IMR-90 (cell line): ENCODE measurements at regions of chr14 and their contacts with region 1.

Region 1: GRCh38 chr14:67999693-68000384 is 180.3 kb downstream of the RAD51B start:
- DNase-seq: peak; percentile 86
- ATAC-seq: peak; percentile 95
- H3K4me3 ChIP-seq: no peak overlapping the region
- H3K27ac ChIP-seq: peak overlapping the region; percentile 70
- H3K4me1 ChIP-seq: peaks cover 4% of the 10 kb centered on the region; the same call in 1 of the 2 replicates
- H3K27me3 ChIP-seq: no peaks in the 10 kb centered on the region
- CTCF ChIP-seq: no peak
- POLR2A ChIP-seq: no peak
- RAD21 ChIP-seq: 0 out of 2 replicates have a peak, but pooled peaks have one; percentile 2

Region 2: DNA sequence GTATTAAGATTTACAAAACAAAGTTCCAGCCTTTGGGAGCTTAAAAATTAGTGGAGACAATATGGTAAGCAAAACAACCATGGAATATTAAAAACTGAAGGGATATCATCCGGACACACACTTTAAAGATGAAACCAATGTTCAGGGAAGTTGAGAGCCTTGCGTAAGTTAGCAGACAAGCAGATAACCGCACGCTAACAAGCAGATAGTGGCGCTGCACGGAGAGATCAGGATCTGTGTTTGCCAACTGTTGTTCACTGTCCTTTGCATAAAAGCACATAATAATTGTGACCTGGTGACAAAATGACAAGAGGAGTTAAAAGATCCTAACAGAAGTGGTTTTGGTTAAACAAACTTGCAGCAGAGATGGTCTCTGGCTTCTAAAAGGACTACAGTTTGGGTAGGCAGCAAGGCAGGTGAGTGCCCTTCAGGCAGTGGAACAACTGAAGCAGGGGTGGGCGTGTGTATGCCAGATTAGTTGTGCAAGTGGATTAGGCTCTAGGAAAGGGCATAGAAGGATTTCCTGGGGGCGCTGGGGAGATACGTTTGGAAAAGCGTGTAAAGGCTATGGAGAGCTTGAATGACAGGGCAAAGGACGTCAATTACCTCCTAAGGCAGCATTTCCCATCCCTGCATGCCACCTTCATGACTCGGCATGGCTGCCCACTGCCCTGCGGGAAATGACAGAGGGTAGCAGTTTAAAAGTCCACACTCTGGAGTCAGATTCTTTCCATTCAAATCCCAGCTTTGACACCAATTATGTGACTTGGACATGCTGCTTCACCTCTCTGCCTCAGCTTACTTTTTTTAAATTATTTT is 496.7 kb before region 1 on chr14:
- CTCF ChIA-PET with region 1: no interaction called
- POLR2A ChIA-PET with region 1: no interaction called
- dilution Hi-C with region 1: no loop called
- in situ Hi-C with region 1: no loop called
- intact Hi-C with region 1: no loop called
- DNase-seq: no peak
- ATAC-seq: no peak
- H3K4me3 ChIP-seq: no peak overlapping the region
- H3K27ac ChIP-seq: no peak overlapping the region
- H3K4me1 ChIP-seq: no peaks in the 10 kb centered on the region
- H3K27me3 ChIP-seq: peaks cover 13% of the 10 kb centered on the region
- CTCF ChIP-seq: no peak
- POLR2A ChIP-seq: no peak
- RAD21 ChIP-seq: no peak

Region 3: GRCh38 chr14:67883717-67884116 is 116.1 kb before region 1 on chr14:
- CTCF ChIA-PET with region 1: no interaction called
- POLR2A ChIA-PET with region 1: no interaction called
- dilution Hi-C with region 1: no loop called
- in situ Hi-C with region 1: no loop called
- intact Hi-C with region 1: no loop called
- DNase-seq: peak; percentile 28
- ATAC-seq: no peak
- H3K4me3 ChIP-seq: no peak overlapping the region
- H3K27ac ChIP-seq: no peak overlapping the region
- H3K4me1 ChIP-seq: no peaks in the 10 kb centered on the region
- H3K27me3 ChIP-seq: no peaks in the 10 kb centered on the region
- CTCF ChIP-seq: peak; percentile 53
- POLR2A ChIP-seq: no peak
- RAD21 ChIP-seq: peak; percentile 51

Region 4: DNA sequence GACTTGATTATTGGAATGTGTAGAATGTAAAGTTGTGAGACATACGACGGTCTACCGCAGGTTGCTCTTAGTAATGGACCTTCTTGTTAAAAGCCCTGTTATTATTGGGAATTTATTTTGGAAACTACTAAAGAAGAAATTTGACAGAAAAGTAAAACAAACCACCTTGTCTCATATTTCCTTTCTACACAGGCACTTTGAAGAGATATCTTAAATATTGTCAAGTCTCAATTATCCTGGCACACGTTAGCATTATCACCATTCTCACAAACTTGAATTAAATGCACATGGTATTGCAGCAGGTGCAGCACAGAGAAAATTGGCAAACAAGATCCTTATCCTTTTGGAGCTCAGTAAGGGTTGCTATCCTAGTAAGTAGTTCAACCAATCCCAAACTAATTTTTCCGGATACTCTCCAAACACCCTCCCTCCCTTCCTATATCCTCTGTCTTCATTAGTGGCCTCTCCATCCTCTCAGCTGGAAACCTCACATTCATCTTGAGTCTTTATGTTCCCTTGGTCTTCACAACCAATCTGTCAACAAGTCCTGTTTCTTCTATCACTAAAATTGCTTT is 35.0 kb before region 1 on chr14:
- CTCF ChIA-PET with region 1: no interaction called
- POLR2A ChIA-PET with region 1: no interaction called
- dilution Hi-C with region 1: no loop called
- in situ Hi-C with region 1: no loop called
- intact Hi-C with region 1: loop called (anchors 1 kb)
- DNase-seq: no peak
- ATAC-seq: no peak
- H3K4me3 ChIP-seq: no peak overlapping the region
- H3K27ac ChIP-seq: no peak overlapping the region
- H3K4me1 ChIP-seq: no peaks in the 10 kb centered on the region
- H3K27me3 ChIP-seq: no peaks in the 10 kb centered on the region; the same call in 1 of the 2 replicates
- CTCF ChIP-seq: no peak
- POLR2A ChIP-seq: no peak
- RAD21 ChIP-seq: no peak

Region 5: GRCh38 chr14:68466491-68467032 is 466.7 kb after region 1 on chr14:
- CTCF ChIA-PET with region 1: no interaction called
- POLR2A ChIA-PET with region 1: no interaction called
- dilution Hi-C with region 1: no loop called
- in situ Hi-C with region 1: no loop called
- intact Hi-C with region 1: no loop called
- DNase-seq: peak; percentile 92
- ATAC-seq: peak; percentile 89
- H3K4me3 ChIP-seq: no peak overlapping the region
- H3K27ac ChIP-seq: peak overlapping the region; percentile 76
- H3K4me1 ChIP-seq: peaks cover 8% of the 10 kb centered on the region
- H3K27me3 ChIP-seq: no peaks in the 10 kb centered on the region
- CTCF ChIP-seq: no peak
- POLR2A ChIP-seq: no peak
- RAD21 ChIP-seq: no peak